Dendritic cell treated with granulocyte-macrophage colony-stimulating factor and Interleukin-4, amounts not matched to agents 40 ng/mL and 50 ng/mL, for 4 days (primary cell): ENCODE measurements at regions of chr12 and their contacts with region 1.

Region 1: DNA sequence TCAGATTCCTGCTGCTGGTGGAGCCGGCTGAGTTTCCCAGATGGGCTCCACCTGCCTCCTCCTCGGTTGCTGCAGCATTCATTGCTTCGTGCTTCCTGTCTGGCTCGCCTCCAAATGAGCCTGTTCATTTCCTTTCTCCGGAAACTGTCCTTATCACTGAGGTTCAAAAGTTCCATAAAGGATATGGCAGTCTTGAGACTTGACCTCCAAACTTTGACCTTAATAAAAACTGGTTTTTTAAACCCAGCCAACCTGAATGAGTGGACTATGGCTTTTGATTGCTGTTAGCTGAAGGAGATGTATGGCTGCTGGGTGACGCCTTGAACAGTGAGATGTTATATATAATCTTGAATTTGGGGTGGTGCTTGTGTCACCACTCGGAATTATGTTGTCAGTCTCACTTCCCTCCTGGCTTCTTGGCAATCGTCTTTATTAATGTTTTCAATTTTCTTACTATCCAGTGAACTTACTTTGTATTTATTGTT is 62.7 kb downstream of the RASSF3 start:
- H3K4me3 Mint-ChIP-seq: no peak overlapping the region
- H3K27ac Mint-ChIP-seq: peak overlapping the region; percentile 47
- H3K4me1 Mint-ChIP-seq: peaks cover 81% of the 10 kb centered on the region
- H3K27me3 Mint-ChIP-seq: no peaks in the 10 kb centered on the region

Region 2: DNA sequence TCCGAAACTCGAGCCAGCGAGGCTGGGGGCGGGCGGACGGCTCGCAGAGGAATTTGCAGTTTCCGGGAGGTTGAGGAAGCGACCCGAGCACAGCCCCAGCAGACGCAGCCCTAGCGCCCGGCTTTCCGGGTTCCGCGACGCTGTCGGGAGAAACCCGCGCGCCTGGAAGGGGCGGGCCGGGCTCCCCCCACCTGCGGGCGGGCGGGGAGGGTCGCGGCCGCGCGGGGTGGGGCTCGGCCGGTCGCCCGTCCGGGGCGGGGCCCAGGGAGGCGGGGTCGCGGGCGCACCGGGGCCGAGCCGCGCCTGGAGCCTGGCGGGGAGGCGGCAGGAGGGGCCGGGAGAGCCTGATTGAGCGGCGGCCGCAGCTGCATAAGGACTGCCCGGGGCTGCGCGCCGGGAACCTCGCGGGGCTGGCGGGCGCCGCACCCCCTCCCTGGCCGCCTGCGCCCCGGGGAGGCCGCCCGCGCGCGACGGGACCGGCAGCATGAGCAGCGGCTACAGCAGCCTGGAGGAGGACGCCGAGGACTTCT is 62.8 kb before region 1 on chr12 and contains the start of gene RASSF3:
- intact Hi-C with region 1: no loop called
- H3K4me3 Mint-ChIP-seq: peak within 1 kb of the TSS; percentile 96
- H3K27ac Mint-ChIP-seq: peak within 1 kb of the TSS; percentile 95
- H3K4me1 Mint-ChIP-seq: peaks cover 38% of the 10 kb centered on the region
- H3K27me3 Mint-ChIP-seq: no peaks in the 10 kb centered on the region

Region 3: DNA sequence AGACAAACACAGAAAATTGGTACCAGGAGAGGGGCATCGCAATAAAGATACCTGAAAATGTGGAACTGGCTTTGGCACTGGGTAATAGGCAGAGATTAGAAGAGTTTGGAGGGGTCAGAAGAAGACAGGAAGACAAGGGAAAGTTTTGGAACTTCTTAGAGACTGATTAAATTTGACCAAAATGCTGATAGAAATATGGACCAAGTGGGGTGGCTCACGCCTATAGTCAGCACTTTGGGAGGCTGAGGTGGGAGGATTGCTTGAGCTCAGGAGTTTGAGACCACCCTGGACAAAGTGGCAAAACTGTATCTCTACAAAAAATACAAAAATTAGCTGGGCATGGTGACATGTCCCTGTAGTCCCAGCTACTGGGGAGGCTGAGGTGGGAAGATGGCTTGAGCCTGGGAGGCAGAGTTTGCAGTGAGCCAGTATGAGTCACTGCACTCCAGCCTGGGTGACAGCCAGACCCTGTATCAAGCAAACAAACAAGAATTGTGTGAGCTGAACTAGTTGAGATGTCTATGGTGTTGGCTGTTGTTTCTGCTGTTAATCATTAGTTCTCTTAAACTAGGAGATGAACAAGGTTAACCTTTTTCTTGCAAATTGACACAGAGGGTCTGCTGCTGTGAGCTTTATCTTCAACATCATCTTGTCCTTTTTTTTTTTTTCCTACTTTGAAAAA is 39.2 kb before region 1 on chr12:
- intact Hi-C with region 1: loop called (anchors 5 kb)
- H3K4me3 Mint-ChIP-seq: no peak overlapping the region
- H3K27ac Mint-ChIP-seq: peak overlapping the region; percentile 65
- H3K4me1 Mint-ChIP-seq: peaks cover 67% of the 10 kb centered on the region
- H3K27me3 Mint-ChIP-seq: no peaks in the 10 kb centered on the region